Common myeloid progenitor, CD34-positive (primary cell): ENCODE measurements at regions of chr11 and their contacts with region 1.

Region 1: GRCh38 chr11:123033895-123034294 is 28.0 kb downstream of the HSPA8 start:
- DNase-seq: peak in 1 of 3 donors; percentile 19
- H3K4me3 ChIP-seq: no peak overlapping the region
- H3K27ac ChIP-seq: no peak overlapping the region
- H3K4me1 ChIP-seq: no peaks in the 10 kb centered on the region
- H3K27me3 ChIP-seq: no peaks in the 10 kb centered on the region

Region 2: GRCh38 chr11:123020968-123021367 is 12.9 kb before region 1 on chr11:
- CTCF ChIA-PET with region 1: interaction called, 12 read pairs
- POLR2A ChIA-PET with region 1: no interaction called
- DNase-seq: peak; percentile 66 to 83 (median 80)
- H3K4me3 ChIP-seq: no peak overlapping the region
- H3K27ac ChIP-seq: no peak overlapping the region
- H3K4me1 ChIP-seq: peaks cover 0 to 5% (median 0%) of the 10 kb centered on the region in 4 experiments
- H3K27me3 ChIP-seq: no peaks in the 10 kb centered on the region